ENCODE measurements at regions of chr12 and their contacts with region 1.

Region 1: DNA sequence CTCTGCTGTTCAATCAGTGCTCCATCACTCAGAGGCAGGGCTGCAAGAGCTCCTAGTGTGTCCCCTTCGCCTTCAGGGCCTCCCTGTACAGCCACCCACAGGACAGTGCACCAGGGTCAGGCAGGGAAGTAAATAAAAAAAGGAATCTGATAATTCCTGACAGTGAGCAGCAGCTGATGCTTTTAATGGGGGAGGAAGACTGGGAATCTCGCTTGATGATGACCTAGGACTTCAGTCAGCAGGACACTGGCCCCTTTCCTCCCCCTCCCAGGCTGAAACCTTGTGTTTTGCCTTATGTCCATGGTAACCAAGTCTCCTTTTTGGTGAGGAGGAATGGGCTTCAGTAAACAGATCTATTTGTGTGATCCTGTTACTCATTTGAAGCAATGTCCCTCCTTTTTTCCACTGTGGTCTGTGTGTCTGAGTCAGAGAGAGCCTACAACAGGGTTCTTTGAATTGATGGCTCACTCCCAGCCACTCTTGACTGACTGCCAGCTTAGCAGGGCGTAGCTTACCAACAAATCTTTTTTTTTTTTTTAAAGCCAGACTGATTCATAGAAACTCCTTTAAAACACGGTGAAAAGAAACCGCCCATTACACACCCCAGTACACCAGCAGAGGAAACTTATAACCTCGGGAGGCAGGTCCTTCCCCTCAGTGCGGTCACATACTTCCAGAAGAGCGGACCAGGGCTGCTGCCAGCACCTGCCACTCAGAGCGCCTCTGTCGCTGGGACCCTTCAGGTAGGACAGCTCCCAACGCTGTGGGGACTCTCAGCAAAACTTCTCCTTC is at the start of gene EMP1:
- DNase-seq: peak; percentile 97
- H3K4me3 ChIP-seq: peak within 1 kb of the TSS; percentile 89
- CTCF ChIP-seq: no peak

Region 2: GRCh38 chr12:13100882-13101769 is 95.2 kb before region 1 on chr12:
- CTCF ChIA-PET with region 1: interaction called, 6 read pairs
- POLR2A ChIA-PET with region 1: interaction called, 20 read pairs
- DNase-seq: no peak
- H3K4me3 ChIP-seq: peak overlapping the region; percentile 51
- CTCF ChIP-seq: no peak

Region 3: DNA sequence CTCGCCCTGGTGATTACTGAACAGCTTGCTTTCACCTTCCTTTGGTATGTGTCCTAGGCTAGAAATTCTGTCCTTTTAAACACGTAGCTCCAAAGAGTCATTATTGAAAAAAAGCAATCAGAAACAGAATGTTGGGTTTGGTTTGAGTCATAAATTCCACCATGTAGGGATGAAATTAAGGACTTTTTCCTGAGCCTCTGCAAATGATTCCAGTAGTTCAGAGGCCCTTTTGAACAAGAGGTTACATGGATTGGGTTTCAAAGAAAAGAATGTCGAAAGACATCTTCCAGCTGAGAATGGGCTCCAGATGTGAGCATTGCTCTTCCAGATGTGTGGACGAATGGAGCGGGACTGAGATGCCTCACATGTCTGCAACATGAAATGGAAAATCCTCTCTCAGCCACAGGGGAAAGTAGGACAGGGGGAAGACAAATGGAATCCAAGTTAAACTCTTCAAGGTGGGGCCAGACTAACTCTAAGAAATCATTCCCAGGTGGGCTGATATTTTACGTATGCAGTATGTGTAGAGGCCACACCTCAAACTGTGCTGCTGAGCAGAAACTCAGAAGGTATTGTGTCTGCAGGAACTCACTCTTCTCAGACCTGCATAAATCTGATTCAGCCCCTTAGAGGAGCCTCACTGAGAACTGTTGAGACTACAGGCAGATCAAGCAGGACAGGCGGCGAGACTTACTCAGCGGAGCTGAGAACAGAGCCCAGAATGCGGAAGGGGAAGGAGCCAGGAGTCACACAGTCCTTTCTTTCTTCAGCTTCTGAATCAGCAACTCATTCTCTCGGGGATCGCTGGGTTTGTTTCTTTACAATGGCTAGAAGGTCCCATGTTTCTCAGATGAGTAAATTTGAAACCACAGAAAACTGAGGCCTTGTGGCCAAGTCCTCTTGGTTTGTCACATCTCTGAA is 23.1 kb before region 1 on chr12:
- CTCF ChIA-PET with region 1: interaction called, 4 read pairs
- POLR2A ChIA-PET with region 1: interaction called, 11 read pairs
- DNase-seq: peak; percentile 83
- H3K4me3 ChIP-seq: peak overlapping the region; percentile 29; the same call in 1 of the 2 replicates
- CTCF ChIP-seq: no peak

Measured in AG04449 (cell line).